ENCODE measurements at regions of chr11 and their contacts with region 1.

Region 1: DNA sequence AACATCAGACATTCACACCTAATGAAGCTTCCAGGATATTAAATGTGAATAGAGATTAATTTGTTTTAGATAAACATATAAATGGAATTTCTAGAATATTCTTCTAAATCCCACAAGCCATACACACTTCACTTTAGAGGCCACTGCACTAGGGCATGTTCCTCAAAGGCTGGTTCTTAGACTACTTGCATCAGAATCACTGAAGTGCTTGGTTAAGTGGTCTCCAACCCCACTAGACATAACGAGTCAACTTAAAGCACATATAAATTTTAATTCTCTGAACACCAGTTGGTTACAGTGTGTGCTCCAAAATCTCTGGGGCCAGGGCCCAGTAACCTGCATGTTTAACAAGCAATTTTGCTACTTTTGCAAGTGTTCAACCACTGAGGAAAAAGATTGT is 7.9 kb upstream of the ALKBH8 start:
- DNase-seq: no peak

Region 2: GRCh38 chr11:107689317-107690202 is 116.1 kb after region 1 on chr11:
- intact Hi-C with region 1: loop called (anchors 5 kb)
- DNase-seq: no peak

Region 3: GRCh38 chr11:107770551-107770951 is 197.1 kb after region 1 on chr11:
- intact Hi-C with region 1: loop called (anchors 2 kb)
- DNase-seq: no peak